Right ventricle myocardium inferior (tissue), 1 donor: ENCODE measurements at regions of chr3 and their contacts with region 1.

Region 1: GRCh38 chr3:100400780-100401673 is at the starts of genes LNP1 and TOMM70:
- DNase-seq: peak; percentile 99
- ATAC-seq: peak; percentile 98
- total RNA-seq, gene LNP1: 2.4 TPM
- total RNA-seq, gene TOMM70: 65.9 TPM

Region 2: GRCh38 chr3:99817437-99818240 is 583.4 kb before region 1 on chr3 and contains the start of gene CMSS1:
- intact Hi-C with region 1: loop called (anchors 5 kb)
- DNase-seq: peak; percentile 97
- ATAC-seq: peak; percentile 96
- total RNA-seq, gene CMSS1: 37.0 TPM

Region 3: DNA sequence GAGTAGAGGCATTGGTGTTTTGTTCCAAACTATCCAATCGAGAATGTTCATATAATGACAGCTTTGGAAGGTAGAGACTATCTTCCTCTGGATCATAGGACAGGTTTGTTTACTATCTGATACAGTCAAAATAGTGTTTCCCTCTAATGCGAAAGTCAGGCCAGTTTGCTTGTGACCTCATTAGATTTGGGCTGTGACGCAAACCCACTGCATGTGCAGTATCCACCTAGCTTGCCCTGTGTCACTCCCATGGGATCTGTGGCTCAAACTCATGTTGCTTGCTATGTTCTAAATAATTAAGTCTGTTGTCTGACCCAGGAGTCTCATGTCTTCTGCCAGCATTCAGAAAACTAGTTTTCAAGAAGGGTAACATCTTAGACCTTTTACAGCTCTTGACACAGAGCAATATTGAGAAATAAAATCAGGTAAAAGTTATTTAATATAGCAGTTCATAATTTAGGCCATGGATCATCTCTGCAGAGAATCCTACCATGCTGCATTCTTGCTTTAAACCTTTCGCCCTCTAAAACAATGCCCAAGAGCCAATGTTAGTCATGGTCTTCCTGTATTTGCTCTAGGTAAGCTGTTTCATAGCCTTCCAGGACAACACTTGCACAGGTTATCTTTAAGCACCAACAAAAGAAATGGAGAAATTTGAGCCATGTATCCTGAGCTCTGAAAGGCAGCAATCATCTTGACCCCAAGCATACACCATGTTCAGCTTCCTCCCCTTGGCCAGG is 40.1 kb before region 1 on chr3:
- intact Hi-C with region 1: no loop called
- DNase-seq: no peak
- ATAC-seq: no peak

Region 4: GRCh38 chr3:100465892-100466777 is 65.1 kb after region 1 on chr3:
- intact Hi-C with region 1: no loop called
- DNase-seq: no peak
- ATAC-seq: no peak

Region 5: GRCh38 chr3:100492059-100493006 is 91.3 kb after region 1 on chr3 and contains the start of gene TMEM45A:
- intact Hi-C with region 1: loop called (anchors 5 kb)
- DNase-seq: peak; percentile 97
- ATAC-seq: peak; percentile 100
- total RNA-seq, gene TMEM45A: 8.0 TPM

Region 6: DNA sequence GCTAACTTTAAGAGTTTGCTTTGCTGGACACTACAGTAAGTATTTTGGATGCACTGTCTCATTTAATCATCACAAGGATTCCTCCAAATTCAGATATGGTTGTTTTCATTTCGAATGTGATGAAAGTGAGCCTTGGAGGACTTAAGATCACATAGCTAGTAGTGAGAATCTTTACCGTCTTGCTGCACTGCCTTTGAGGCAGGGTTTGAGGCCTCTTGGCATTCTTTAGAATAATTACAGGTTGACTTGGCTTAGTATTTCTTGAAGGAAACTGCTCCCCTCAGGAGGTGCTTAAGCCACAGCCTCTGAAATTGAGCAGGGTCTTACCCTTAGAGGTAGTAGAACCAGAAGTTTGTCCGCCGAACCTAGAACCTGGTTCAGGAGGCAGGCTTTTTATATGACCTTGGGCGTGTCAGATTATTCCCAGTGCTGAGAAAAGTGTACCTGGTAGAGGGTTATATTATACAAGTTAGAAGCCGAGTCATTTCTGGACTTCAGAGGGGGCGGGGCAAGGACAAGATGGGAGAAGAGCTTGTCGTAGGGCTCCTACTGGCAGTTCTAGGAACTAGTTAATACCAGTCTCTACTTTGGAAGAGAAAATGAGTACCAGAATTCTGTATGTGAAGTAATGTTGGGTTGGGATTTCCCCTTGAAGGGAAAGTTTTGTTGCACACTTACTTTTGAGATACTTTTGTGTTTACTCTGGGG is 309.4 kb after region 1 on chr3:
- intact Hi-C with region 1: loop called (anchors 5 kb)
- DNase-seq: no peak
- ATAC-seq: no peak